Activated naive CD4-positive, alpha-beta T cell treated with anti-CD3 and anti-CD28 coated beads for 36 hours (primary cell): ENCODE measurements at regions of chr9 and their contacts with region 1.

Region 1: GRCh38 chr9:114691046-114691955 is 9.3 kb upstream of the TEX48 start:
- DNase-seq: peak; percentile 89
- H3K4me3 Mint-ChIP-seq: peak overlapping the region; percentile 8
- H3K27ac Mint-ChIP-seq: peak overlapping the region; percentile 94
- H3K4me1 Mint-ChIP-seq: peaks cover 82% of the 10 kb centered on the region
- H3K27me3 Mint-ChIP-seq: no peaks in the 10 kb centered on the region

Region 2: GRCh38 chr9:114385412-114386181 is 305.7 kb before region 1 on chr9:
- CTCF ChIA-PET with region 1: interaction called, 3 read pairs
- intact Hi-C with region 1: loop called (anchors 1 kb)
- DNase-seq: peak; percentile 97
- H3K4me3 Mint-ChIP-seq: peak overlapping the region; percentile 97
- H3K27ac Mint-ChIP-seq: peak overlapping the region; percentile 100
- H3K4me1 Mint-ChIP-seq: peaks cover 67% of the 10 kb centered on the region
- H3K27me3 Mint-ChIP-seq: no peaks in the 10 kb centered on the region

Region 3: GRCh38 chr9:114738581-114739316 is 47.4 kb after region 1 on chr9:
- CTCF ChIA-PET with region 1: interaction called, 36 read pairs
- intact Hi-C with region 1: loop called (anchors 2 kb)
- DNase-seq: peak; percentile 82
- H3K4me3 Mint-ChIP-seq: no peak overlapping the region
- H3K27ac Mint-ChIP-seq: peak overlapping the region; percentile 86
- H3K4me1 Mint-ChIP-seq: peaks cover 56% of the 10 kb centered on the region
- H3K27me3 Mint-ChIP-seq: no peaks in the 10 kb centered on the region

Region 4: GRCh38 chr9:114830546-114830945 is 139.2 kb after region 1 on chr9:
- CTCF ChIA-PET with region 1: no interaction called
- intact Hi-C with region 1: loop called (anchors 5 kb)
- DNase-seq: no peak
- H3K4me3 Mint-ChIP-seq: no peak overlapping the region
- H3K27ac Mint-ChIP-seq: no peak overlapping the region
- H3K4me1 Mint-ChIP-seq: peaks cover 16% of the 10 kb centered on the region
- H3K27me3 Mint-ChIP-seq: no peaks in the 10 kb centered on the region

Region 5: DNA sequence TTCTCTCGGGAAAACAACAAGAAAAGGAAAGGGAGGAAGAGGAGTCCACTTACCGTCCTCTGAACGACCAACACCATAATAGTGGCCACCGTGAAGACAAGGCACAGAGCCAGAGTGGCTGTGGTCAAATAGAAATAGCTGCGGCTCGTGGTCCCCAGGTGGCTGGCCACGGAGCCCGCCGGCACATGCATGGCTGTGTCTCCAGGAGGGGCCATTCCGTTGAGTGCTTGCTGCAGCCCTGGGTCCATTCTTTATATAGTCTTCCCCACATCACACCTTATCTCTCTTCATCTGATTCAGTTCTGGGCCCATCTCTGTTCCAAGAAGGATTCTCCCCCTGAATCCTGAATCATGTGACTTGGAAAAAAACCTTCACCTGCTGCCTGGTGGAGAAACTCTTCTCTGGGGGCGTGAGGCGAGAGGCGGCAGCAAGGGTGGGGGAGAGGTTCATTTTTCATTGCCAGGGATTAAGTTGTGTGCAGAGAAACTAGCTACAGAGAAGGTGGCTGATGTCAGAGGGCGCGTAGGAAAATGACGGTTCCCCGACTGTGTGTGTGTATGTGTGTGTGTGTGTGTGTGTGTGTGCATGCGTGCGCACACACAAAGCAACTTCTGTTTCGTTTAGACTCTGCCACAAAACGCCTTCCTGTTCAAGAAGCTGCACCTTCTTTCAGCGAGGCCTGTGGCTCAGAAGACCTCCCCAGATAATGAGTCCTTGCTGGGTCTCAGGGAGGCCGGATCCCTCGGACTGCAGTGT is 238.9 kb after region 1 on chr9 and contains the start of gene TNFSF8:
- CTCF ChIA-PET with region 1: interaction called, 3 read pairs
- intact Hi-C with region 1: loop called (anchors 2 kb)
- DNase-seq: peak; percentile 90
- H3K4me3 Mint-ChIP-seq: peak within 1 kb of the TSS; percentile 94
- H3K27ac Mint-ChIP-seq: peak within 1 kb of the TSS; percentile 97
- H3K4me1 Mint-ChIP-seq: peaks cover 38% of the 10 kb centered on the region
- H3K27me3 Mint-ChIP-seq: no peaks in the 10 kb centered on the region
- total RNA-seq, gene TNFSF8: 25.9 to 26.4 TPM

Region 6: GRCh38 chr9:115000217-115000639 is 308.9 kb after region 1 on chr9:
- CTCF ChIA-PET with region 1: no interaction called
- intact Hi-C with region 1: loop called (anchors 1 kb)
- DNase-seq: peak; percentile 68
- H3K4me3 Mint-ChIP-seq: peak overlapping the region; percentile 66
- H3K27ac Mint-ChIP-seq: peak overlapping the region; percentile 83
- H3K4me1 Mint-ChIP-seq: peaks cover 51% of the 10 kb centered on the region
- H3K27me3 Mint-ChIP-seq: no peaks in the 10 kb centered on the region